ENCODE measurements at regions of chr17 and their contacts with region 1.

Region 1: GRCh38 chr17:1648963-1649843 is 463 bp downstream of the RILP start:
- DNase-seq: peak; percentile 83
- ATAC-seq: peak; percentile 73
- H3K4me3 ChIP-seq: peak overlapping the region; percentile 74 to 83 (median 81)
- H3K27ac ChIP-seq: peak overlapping the region; percentile 93
- H3K4me1 ChIP-seq: peaks cover 64% of the 10 kb centered on the region
- H3K27me3 ChIP-seq: peaks cover 0 to 1% of the 10 kb centered on the region in 2 experiments; a peak in 1 of 5 replicates
- CTCF ChIP-seq: peak; percentile 85
- EP300 ChIP-seq: no peak; a peak in 1 of 4 replicates
- POLR2A ChIP-seq: peak; percentile 47 to 90; a peak in 3 of 4 replicates
- RAD21 ChIP-seq: peak; percentile 38

Region 2: DNA sequence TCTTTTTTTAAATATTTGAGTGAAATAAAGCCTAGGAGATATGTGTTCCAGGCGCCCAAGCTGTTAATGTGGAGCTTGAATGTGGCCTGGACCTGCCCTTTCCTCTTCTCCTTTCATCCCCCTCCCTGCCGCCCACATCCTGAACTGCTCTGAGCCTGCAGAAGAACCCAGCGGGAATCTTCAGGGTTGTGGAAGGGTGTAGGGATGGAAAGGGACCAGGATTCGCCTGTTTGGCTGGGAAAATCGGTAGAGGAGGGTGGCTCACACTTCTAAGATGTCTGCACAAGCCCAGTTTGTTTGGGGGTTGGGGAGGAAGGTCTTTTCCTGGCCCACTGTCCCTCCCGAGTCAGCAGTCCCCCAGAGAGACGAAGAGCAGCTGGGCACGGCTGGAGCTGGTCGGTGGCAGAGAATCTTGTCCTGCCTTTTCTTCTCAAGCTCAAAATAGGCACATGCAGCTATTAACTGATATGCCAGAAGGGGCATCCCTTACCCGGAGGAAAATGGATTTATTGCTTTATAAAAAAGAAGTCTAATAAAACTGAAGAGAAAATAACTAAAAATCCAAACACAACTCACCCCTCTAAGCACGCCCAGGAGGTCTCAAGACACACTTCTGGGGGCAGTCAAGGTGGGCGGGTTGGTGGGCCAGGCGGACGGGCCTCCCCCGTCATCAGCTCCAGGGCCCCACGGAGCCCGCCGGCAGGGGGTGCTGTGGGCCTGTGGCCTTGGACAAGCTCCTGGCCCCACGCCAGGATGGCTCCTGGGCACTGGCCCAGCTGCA is 75.1 kb before region 1 on chr17:
- CTCF ChIA-PET with region 1: interaction called, 25 read pairs
- POLR2A ChIA-PET with region 1: interaction called, 14 read pairs
- in situ Hi-C with region 1: no loop called
- intact Hi-C with region 1: no loop called
- DNase-seq: peak; percentile 63
- ATAC-seq: peak; percentile 70
- H3K4me3 ChIP-seq: no peak overlapping the region
- H3K27ac ChIP-seq: no peak overlapping the region
- H3K4me1 ChIP-seq: peaks cover 56% of the 10 kb centered on the region
- H3K27me3 ChIP-seq: peaks cover 10 to 12% of the 10 kb centered on the region in 2 experiments; a peak in 3 of 5 replicates
- CTCF ChIP-seq: peak; percentile 96
- EP300 ChIP-seq: peak in 1 of 2 experiments; percentile 30; a peak in 1 of 4 replicates
- POLR2A ChIP-seq: no peak
- RAD21 ChIP-seq: peak; percentile 97

Region 3: GRCh38 chr17:1590031-1590748 is 59.0 kb before region 1 on chr17:
- CTCF ChIA-PET with region 1: no interaction called
- POLR2A ChIA-PET with region 1: interaction called, 10 read pairs
- in situ Hi-C with region 1: no loop called
- intact Hi-C with region 1: no loop called
- DNase-seq: peak; percentile 90
- ATAC-seq: peak; percentile 86
- H3K4me3 ChIP-seq: peak overlapping the region in 1 of 3 experiments; percentile 38; a peak in 2 of 6 replicates
- H3K27ac ChIP-seq: peak overlapping the region; percentile 59
- H3K4me1 ChIP-seq: peaks cover 81% of the 10 kb centered on the region
- H3K27me3 ChIP-seq: no peaks in the 10 kb centered on the region
- CTCF ChIP-seq: no peak; the same call in 1 of the 2 replicates
- EP300 ChIP-seq: peak in 1 of 2 experiments; percentile 46; a peak in 2 of 4 replicates
- POLR2A ChIP-seq: no peak
- RAD21 ChIP-seq: no peak

Region 4: GRCh38 chr17:1628856-1629646 is 20.2 kb before region 1 on chr17:
- CTCF ChIA-PET with region 1: no interaction called
- POLR2A ChIA-PET with region 1: interaction called, 11 read pairs
- in situ Hi-C with region 1: no loop called
- intact Hi-C with region 1: no loop called
- DNase-seq: peak; percentile 91
- ATAC-seq: peak; percentile 85
- H3K4me3 ChIP-seq: peak overlapping the region; percentile 62 to 93 (median 90)
- H3K27ac ChIP-seq: peak overlapping the region; percentile 71
- H3K4me1 ChIP-seq: peaks cover 40% of the 10 kb centered on the region
- H3K27me3 ChIP-seq: peaks cover 0 to 2% of the 10 kb centered on the region in 2 experiments; a peak in 1 of 5 replicates
- CTCF ChIP-seq: peak; percentile 50
- EP300 ChIP-seq: no peak; a peak in 1 of 4 replicates
- POLR2A ChIP-seq: 0 out of 4 replicates have a peak, but pooled peaks of 1 of the 2 experiments have one; percentile 42
- RAD21 ChIP-seq: peak; percentile 78

Region 5: DNA sequence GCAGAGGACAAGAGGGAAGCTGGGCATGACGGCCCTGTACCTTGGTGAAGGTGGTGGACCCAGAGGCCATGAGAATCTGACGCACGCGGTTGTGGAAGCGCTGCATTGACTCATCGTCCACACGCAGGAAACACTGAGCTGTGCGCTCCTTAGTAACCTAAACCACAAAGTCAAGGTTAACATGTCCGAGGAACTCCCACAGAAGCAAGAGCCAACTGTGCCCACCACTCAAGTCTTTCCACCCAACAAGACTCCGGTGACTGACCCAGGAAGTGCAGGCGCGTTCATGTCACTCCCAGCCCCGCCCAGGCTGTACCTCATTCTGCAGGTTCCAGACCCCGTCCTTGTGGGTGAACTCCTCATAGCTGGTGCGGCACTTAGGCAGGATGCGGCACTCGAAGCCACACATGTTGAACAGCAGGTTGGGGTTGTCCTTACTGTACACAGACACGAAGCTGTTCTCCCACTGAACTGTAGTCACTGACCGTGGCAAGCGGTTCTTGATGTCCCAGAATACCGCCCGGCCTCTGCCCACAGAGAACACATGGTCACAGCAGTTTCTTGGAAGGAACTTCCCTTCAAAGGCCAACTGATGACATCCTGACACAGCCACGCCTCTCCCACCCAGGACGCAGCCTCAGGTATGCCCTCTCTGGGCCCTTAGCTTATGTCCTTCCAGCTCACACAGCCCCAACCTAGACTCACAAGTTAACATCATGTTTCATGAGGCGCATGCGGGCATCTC is 24.0 kb after region 1 on chr17:
- CTCF ChIA-PET with region 1: no interaction called
- POLR2A ChIA-PET with region 1: interaction called, 20 read pairs
- in situ Hi-C with region 1: no loop called
- intact Hi-C with region 1: no loop called
- DNase-seq: no peak
- ATAC-seq: no peak
- H3K4me3 ChIP-seq: no peak overlapping the region
- H3K27ac ChIP-seq: no peak overlapping the region
- H3K4me1 ChIP-seq: no peaks in the 10 kb centered on the region
- H3K27me3 ChIP-seq: no peaks in the 10 kb centered on the region
- CTCF ChIP-seq: no peak
- EP300 ChIP-seq: no peak
- POLR2A ChIP-seq: 0 out of 4 replicates have a peak, but pooled peaks of 1 of the 2 experiments have one; percentile 12
- RAD21 ChIP-seq: no peak

Region 6: GRCh38 chr17:1684378-1685189 is 35.4 kb after region 1 on chr17 and contains the start of gene PRPF8:
- CTCF ChIA-PET with region 1: no interaction called
- POLR2A ChIA-PET with region 1: interaction called, 18 read pairs
- in situ Hi-C with region 1: no loop called
- intact Hi-C with region 1: no loop called
- DNase-seq: peak; percentile 94
- ATAC-seq: peak; percentile 99
- H3K4me3 ChIP-seq: peak within 1 kb of the TSS; percentile 88 to 90 (median 89)
- H3K27ac ChIP-seq: peak within 1 kb of the TSS; percentile 88
- H3K4me1 ChIP-seq: peaks cover 28% of the 10 kb centered on the region
- H3K27me3 ChIP-seq: no peaks in the 10 kb centered on the region
- CTCF ChIP-seq: no peak
- EP300 ChIP-seq: 0 out of 4 replicates have a peak, but pooled peaks of 1 of the 2 experiments have one; percentile 7
- POLR2A ChIP-seq: peak; percentile 92 to 93
- RAD21 ChIP-seq: no peak; the same call in 1 of the 2 replicates
- total RNA-seq, gene PRPF8: 112 and 318 TPM in 2 replicates

Region 7: GRCh38 chr17:1810450-1811103 is 161.4 kb after region 1 on chr17:
- CTCF ChIA-PET with region 1: no interaction called
- POLR2A ChIA-PET with region 1: interaction called, 18 read pairs
- in situ Hi-C with region 1: no loop called
- intact Hi-C with region 1: no loop called
- DNase-seq: peak; percentile 87
- ATAC-seq: peak; percentile 100
- H3K4me3 ChIP-seq: peak overlapping the region in 2 of 3 experiments; percentile 0 to 57; a peak in 4 of 6 replicates
- H3K27ac ChIP-seq: peak overlapping the region; percentile 87
- H3K4me1 ChIP-seq: peaks cover 41% of the 10 kb centered on the region
- H3K27me3 ChIP-seq: no peaks in the 10 kb centered on the region
- CTCF ChIP-seq: 0 out of 2 replicates have a peak, but pooled peaks have one; percentile 6
- EP300 ChIP-seq: peak; percentile 25 to 66; a peak in 3 of 4 replicates
- POLR2A ChIP-seq: peak; percentile 80 to 89
- RAD21 ChIP-seq: peak; percentile 19